ENCODE measurements at regions of chr1 and their contacts with region 1.

Region 1: DNA sequence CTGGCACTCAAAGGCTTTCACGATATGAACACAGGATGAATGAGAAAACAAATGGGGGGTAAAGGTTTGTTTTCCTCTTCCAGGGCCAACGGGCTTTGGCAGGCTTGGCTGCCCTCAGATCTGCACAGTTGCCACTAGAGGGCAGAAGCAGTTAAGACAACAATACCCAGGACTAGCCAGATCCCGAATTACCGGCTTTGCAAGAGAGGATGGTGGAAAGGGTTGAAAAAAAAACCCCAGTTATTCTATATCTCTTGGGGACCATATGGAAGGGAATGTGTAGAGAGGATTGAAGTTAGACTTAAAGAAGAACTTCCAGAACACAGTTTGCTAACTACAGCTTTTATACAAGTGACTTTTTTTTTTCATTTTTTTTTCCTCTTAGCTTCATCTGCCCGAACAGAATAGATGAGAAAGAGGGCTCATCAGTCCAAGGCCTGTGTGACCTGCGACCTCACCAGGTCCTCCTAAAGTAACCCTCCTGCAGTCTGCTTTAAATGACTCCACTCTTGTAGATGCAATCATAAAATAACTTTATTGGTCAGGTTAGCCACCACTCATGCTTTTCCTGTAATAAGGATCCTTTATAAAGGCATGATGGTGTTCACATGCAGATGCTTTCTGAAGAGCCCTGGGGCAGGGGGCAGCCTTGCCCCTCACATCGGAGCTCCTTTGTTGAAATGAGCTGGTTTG is 10.7 kb downstream of the FMOD start:
- DNase-seq: no peak
- H3K4me3 ChIP-seq: no peak overlapping the region
- CTCF ChIP-seq: peak; percentile 83

Region 2: GRCh38 chr1:202835548-202836090 is 504.6 kb before region 1 on chr1:
- CTCF ChIA-PET with region 1: no interaction called
- POLR2A ChIA-PET with region 1: no interaction called
- DNase-seq: no peak
- H3K4me3 ChIP-seq: no peak overlapping the region
- CTCF ChIP-seq: no peak

Region 3: DNA sequence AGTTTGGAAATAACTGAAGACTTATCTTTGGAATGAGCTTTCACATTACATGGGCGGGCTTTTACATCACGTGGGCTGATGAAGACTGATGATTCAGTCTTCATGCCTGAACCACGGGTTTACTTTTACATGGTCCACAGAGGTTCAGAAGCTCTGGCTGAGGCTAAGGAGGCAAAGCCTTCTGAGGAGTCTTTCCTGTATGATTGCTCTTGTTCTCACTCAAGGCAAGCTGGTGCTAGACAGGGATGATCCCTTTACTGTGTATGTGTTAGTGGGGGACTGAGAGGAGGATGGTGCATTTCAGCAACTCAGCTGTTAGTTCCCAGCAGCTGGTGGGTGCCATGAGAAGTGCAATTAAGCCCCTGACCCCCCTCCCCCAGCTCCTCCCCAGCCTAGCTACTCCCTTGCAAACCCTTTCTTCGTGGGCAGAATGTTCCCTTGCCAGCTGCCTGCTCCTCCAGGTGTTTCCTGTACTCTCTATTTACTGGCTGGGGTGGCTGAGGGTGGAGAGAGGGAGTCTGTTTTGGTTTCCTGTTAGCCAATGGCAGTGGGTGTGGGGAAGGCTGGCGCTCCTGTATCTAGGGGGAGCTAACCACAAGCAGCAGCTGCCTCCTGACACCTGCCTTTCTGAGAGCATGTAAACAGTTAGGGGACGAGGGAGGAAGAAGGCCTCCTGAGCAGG is 19.5 kb before region 1 on chr1:
- CTCF ChIA-PET with region 1: interaction called, 188 read pairs
- POLR2A ChIA-PET with region 1: no interaction called
- DNase-seq: no peak
- H3K4me3 ChIP-seq: no peak overlapping the region
- CTCF ChIP-seq: no peak

Region 4: GRCh38 chr1:203381151-203381751 is 41.0 kb after region 1 on chr1:
- CTCF ChIA-PET with region 1: interaction called, 57 read pairs
- POLR2A ChIA-PET with region 1: no interaction called
- DNase-seq: no peak
- H3K4me3 ChIP-seq: no peak overlapping the region
- CTCF ChIP-seq: no peak

Region 5: DNA sequence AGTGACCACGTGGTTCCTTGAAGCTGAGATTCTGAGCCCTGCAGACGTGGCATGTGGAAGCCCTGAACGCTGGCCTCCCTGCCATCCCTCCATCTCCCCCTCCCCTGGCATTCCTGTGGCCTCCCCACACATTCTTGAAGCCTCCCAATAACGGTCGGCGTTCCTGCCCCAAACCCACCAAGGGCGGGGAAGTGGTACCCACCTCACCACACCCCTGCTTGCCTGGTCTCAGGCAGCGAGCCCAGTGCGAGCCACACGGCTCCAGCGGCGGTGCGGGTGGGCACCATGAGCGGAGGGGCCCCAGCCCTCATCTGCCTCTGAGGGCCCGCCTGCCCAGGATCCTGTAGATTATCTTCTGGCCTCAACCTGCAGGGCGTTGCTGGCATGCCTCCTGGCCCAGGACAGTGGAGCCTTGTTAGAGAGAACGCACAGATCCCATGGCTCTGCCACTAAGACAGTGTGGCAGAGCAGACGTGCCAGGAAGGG is 114.8 kb after region 1 on chr1:
- CTCF ChIA-PET with region 1: interaction called, 14 read pairs
- POLR2A ChIA-PET with region 1: no interaction called
- DNase-seq: no peak
- H3K4me3 ChIP-seq: no peak overlapping the region
- CTCF ChIP-seq: no peak

Region 6: GRCh38 chr1:203504397-203505250 is 164.4 kb after region 1 on chr1:
- CTCF ChIA-PET with region 1: interaction called, 64 read pairs
- POLR2A ChIA-PET with region 1: no interaction called
- DNase-seq: no peak
- H3K4me3 ChIP-seq: no peak overlapping the region
- CTCF ChIP-seq: peak; percentile 71

Measured in AG04449 (cell line).